MCF 10A (cell line): ENCODE measurements at regions of chr11 and their contacts with region 1.

Region 1: GRCh38 chr11:59918987-59919589 is 19.1 kb upstream of the OOSP1 start:
- DNase-seq: peak; percentile 72
- H3K4me3 Mint-ChIP-seq: no peak overlapping the region
- H3K27ac Mint-ChIP-seq: no peak overlapping the region
- H3K4me1 Mint-ChIP-seq: peaks cover 7% of the 10 kb centered on the region
- H3K27me3 Mint-ChIP-seq: no peaks in the 10 kb centered on the region
- CTCF ChIP-seq: peak; percentile 68

Region 2: GRCh38 chr11:59810189-59810910 is 108.7 kb before region 1 on chr11 and contains the start of gene MRPL16:
- CTCF ChIA-PET with region 1: interaction called, 30 read pairs
- POLR2A ChIA-PET with region 1: interaction called, 6 read pairs
- intact Hi-C with region 1: no loop called
- DNase-seq: peak; percentile 90
- H3K4me3 Mint-ChIP-seq: peak within 1 kb of the TSS; percentile 90
- H3K27ac Mint-ChIP-seq: peak within 1 kb of the TSS; percentile 93
- H3K4me1 Mint-ChIP-seq: no peaks in the 10 kb centered on the region
- H3K27me3 Mint-ChIP-seq: no peaks in the 10 kb centered on the region
- CTCF ChIP-seq: no peak
- total RNA-seq, gene MRPL16: 31.8 and 39.8 TPM in 2 replicates

Region 3: GRCh38 chr11:59931688-59932087 is 12.6 kb after region 1 on chr11:
- CTCF ChIA-PET with region 1: interaction called, 17 read pairs
- POLR2A ChIA-PET with region 1: no interaction called
- intact Hi-C with region 1: no loop called
- DNase-seq: no peak
- H3K4me3 Mint-ChIP-seq: no peak overlapping the region
- H3K27ac Mint-ChIP-seq: no peak overlapping the region
- H3K4me1 Mint-ChIP-seq: no peaks in the 10 kb centered on the region
- H3K27me3 Mint-ChIP-seq: no peaks in the 10 kb centered on the region
- CTCF ChIP-seq: no peak

Region 4: GRCh38 chr11:60130496-60130895 is 211.4 kb after region 1 on chr11:
- CTCF ChIA-PET with region 1: no interaction called
- POLR2A ChIA-PET with region 1: interaction called, 3 read pairs
- intact Hi-C with region 1: loop called (anchors 1 kb)
- DNase-seq: peak; percentile 40
- H3K4me3 Mint-ChIP-seq: no peak overlapping the region
- H3K27ac Mint-ChIP-seq: no peak overlapping the region
- H3K4me1 Mint-ChIP-seq: no peaks in the 10 kb centered on the region
- H3K27me3 Mint-ChIP-seq: no peaks in the 10 kb centered on the region
- CTCF ChIP-seq: peak; percentile 41